Sigmoid colon (tissue), 7 donors: ENCODE measurements at regions of chr3 and their contacts with region 1.

Region 1: DNA sequence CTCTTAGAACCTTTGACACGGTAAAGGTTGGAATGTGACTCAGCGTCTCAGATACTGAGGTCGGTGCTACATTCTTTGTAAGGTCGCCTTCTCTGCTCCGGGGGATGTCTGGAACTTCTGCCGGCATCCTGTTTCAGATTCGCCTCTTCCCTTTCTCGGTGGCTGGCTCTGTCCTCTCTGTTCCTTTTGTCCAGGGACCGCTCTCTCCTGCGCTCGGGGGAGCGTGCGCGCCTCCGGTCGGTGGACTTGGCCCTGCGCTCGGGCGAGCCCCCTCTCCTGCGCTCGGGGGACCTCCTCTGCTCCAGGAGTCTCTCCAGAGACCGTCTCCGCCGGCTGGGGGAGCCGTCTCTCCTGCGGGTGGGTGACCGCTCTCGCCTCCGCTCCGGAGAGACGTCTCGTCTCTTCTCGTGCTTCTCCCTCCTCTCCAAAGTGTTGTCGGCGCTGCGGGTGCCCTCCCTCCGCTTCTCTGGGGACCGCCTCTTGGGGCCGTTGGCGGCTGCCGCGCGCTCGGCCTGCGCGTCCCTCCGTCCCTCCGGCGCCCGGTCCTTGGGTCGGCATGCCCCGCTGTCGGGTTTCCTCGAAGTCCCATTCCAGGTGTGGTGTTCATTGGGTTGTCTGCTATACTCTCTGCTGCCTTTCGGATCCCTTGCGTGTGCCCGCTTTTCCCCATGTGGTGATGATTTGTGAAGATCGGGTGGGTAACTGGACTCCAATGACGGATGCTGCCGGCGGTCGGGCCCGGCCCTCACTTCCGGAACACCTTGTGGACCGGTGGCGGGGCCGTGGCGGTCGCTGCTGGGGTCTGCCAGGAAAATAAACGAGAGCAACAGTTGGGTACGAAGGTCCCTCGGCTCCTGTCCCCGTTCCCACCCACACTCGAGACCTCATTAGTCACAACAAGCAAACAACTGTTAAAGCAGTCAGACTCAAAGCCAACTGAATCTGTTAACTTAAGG is 668.8 kb upstream of the ADAMTS9 start:
- DNase-seq: no peak
- H3K4me3 ChIP-seq: peak overlapping the region in 3 of 4 donors; percentile 23 to 29 (median 23)
- H3K27ac ChIP-seq: peak overlapping the region in 3 of 4 donors; percentile 38 to 64 (median 58)
- H3K4me1 ChIP-seq: peaks cover 0 to 38% (median 17%) of the 10 kb centered on the region in 4 donors
- H3K27me3 ChIP-seq: no peaks in the 10 kb centered on the region
- CTCF ChIP-seq: no peak
- EP300 ChIP-seq: no peak
- POLR2A ChIP-seq: no peak

Region 2: DNA sequence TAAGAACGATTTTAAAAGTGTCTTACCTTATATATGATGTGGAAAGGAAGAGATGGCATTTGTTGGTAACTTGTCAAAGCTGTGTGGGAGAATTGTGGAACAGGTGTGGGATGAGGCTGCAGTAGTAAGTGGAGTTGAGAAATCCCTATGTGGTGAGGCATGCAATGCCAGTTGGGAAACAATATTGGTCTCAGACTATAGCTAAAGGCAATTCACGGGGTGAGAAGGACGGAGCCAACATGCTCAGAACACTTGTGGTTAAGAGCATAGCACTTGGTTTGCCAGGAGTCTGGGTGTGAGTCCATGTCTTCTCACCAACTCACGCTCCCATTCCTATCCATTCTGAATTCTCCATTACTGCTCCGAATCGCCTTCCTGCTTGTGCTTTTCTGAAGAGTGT is 53.2 kb before region 1 on chr3:
- intact Hi-C with region 1: no loop called
- DNase-seq: no peak
- H3K4me3 ChIP-seq: no peak overlapping the region
- H3K27ac ChIP-seq: no peak overlapping the region
- H3K4me1 ChIP-seq: no peaks in the 10 kb centered on the region
- H3K27me3 ChIP-seq: no peaks in the 10 kb centered on the region
- CTCF ChIP-seq: no peak
- EP300 ChIP-seq: no peak
- POLR2A ChIP-seq: no peak

Region 3: GRCh38 chr3:65402597-65402996 is 46.0 kb after region 1 on chr3:
- intact Hi-C with region 1: loop called (anchors 5 kb)
- DNase-seq: peak; percentile 91
- H3K4me3 ChIP-seq: no peak overlapping the region
- H3K27ac ChIP-seq: peak overlapping the region in 3 of 4 donors; percentile 66 to 79 (median 77)
- H3K4me1 ChIP-seq: peaks cover 0 to 49% (median 36%) of the 10 kb centered on the region in 4 donors
- H3K27me3 ChIP-seq: no peaks in the 10 kb centered on the region
- CTCF ChIP-seq: no peak
- EP300 ChIP-seq: no peak
- POLR2A ChIP-seq: no peak